ENCODE measurements at regions of chr1 and their contacts with region 1.

Region 1: GRCh38 chr1:84620720-84621313 is 46.6 kb upstream of the CTBS start:
- DNase-seq: peak; percentile 80
- H3K4me3 ChIP-seq: peak overlapping the region; percentile 33 to 66 (median 38)
- H3K27ac ChIP-seq: peak overlapping the region; percentile 69
- H3K4me1 ChIP-seq: peaks cover 15% of the 10 kb centered on the region
- H3K27me3 ChIP-seq: no peaks in the 10 kb centered on the region
- CTCF ChIP-seq: peak; percentile 65 to 84
- POLR2A ChIP-seq: no peak

Region 2: DNA sequence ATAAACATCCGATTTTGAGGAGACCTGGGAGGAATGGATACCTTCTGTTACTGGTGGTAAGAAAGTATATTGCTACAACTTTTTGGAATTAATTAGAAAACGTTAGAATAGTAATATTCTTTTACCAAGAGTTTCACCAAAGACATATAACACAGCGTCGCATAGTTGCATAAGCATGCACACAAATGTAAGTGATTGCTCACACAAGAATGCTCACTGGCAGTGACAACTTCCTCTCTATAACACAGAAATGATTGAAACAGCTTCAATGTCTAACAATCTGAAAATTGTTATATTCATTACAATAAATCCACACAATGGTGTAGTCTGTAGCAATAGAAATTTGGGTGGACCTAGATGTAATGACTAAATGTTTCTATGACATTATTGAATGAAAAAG is 1620.5 kb before region 1 on chr1:
- CTCF ChIA-PET with region 1: no interaction called
- POLR2A ChIA-PET with region 1: no interaction called
- dilution Hi-C with region 1: no loop called
- intact Hi-C with region 1: no loop called
- DNase-seq: no peak
- H3K4me3 ChIP-seq: no peak overlapping the region
- H3K27ac ChIP-seq: no peak overlapping the region
- H3K4me1 ChIP-seq: no peaks in the 10 kb centered on the region
- H3K27me3 ChIP-seq: no peaks in the 10 kb centered on the region
- CTCF ChIP-seq: no peak
- POLR2A ChIP-seq: no peak

Region 3: DNA sequence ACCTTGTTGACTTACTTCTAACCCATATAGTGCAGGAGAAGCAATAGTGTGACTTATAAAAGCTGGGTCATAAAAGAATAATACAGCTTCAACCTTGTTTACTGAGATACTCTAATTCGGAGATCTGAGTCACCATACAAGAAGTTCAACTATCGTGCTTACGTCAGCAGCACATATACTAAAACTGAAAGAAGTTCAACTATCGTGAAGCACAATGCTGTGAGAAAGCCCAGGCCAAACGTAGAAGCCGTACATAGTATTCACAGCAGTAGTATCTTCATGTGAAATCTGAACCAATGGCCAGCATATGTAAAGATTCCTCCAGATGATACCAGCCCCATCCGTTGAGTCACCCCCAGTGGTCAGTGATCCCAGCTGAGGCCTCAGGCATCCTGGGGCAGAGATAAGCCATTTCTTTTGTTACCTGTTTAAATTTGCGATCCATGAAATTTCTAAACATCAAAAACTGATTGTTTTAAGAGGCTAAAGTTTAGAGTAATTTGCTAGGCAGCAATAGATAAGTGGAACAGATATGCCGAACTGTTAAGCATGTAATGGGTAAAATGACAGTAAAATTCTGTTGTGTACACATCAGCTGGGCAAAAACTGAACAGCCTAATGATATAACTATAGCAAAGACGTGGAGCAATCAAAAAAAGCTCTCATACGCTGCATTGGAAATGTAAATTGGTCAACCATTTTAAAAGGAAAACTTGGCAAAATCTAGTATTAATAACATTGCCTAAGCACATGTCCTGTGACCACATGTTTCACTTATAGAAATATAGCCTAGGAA is 373.2 kb before region 1 on chr1:
- CTCF ChIA-PET with region 1: no interaction called
- POLR2A ChIA-PET with region 1: no interaction called
- dilution Hi-C with region 1: no loop called
- intact Hi-C with region 1: loop called (anchors 5 kb)
- DNase-seq: no peak
- H3K4me3 ChIP-seq: peak overlapping the region in 1 of 3 experiments; percentile 18
- H3K27ac ChIP-seq: peak overlapping the region; percentile 90
- H3K4me1 ChIP-seq: peaks cover 35% of the 10 kb centered on the region
- H3K27me3 ChIP-seq: no peaks in the 10 kb centered on the region
- CTCF ChIP-seq: no peak
- POLR2A ChIP-seq: no peak

Region 4: DNA sequence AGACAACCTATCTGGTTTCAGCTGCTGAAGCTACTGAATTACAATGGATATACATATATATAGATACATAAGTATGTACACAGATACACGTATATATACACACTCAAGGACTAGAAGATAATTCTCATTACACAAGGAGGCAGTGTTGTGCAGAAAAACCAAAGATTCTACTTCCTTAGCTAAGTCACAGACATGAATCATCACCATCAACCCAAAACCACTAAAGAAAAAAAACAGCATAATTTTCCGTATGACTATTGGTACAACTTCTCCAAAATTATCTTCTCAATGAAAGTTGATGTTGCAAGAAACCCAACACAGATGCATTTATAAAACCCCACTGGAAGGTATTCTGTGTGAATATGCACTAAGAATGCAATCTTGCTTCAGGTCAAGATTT is 178.6 kb before region 1 on chr1:
- CTCF ChIA-PET with region 1: interaction called, 8 read pairs
- POLR2A ChIA-PET with region 1: no interaction called
- dilution Hi-C with region 1: loop called (anchors 25 kb)
- intact Hi-C with region 1: loop called (anchors 1 kb)
- DNase-seq: peak; percentile 89
- H3K4me3 ChIP-seq: no peak overlapping the region
- H3K27ac ChIP-seq: no peak overlapping the region
- H3K4me1 ChIP-seq: peaks cover 2% of the 10 kb centered on the region
- H3K27me3 ChIP-seq: no peaks in the 10 kb centered on the region
- CTCF ChIP-seq: peak; percentile 18 to 26
- POLR2A ChIP-seq: no peak

Region 5: GRCh38 chr1:84492726-84493125 is 128.1 kb before region 1 on chr1:
- CTCF ChIA-PET with region 1: no interaction called
- POLR2A ChIA-PET with region 1: no interaction called
- dilution Hi-C with region 1: no loop called
- intact Hi-C with region 1: no loop called
- DNase-seq: no peak
- H3K4me3 ChIP-seq: no peak overlapping the region
- H3K27ac ChIP-seq: no peak overlapping the region
- H3K4me1 ChIP-seq: no peaks in the 10 kb centered on the region
- H3K27me3 ChIP-seq: no peaks in the 10 kb centered on the region
- CTCF ChIP-seq: no peak
- POLR2A ChIP-seq: no peak

Region 6: GRCh38 chr1:84603941-84604830 is 16.6 kb before region 1 on chr1:
- CTCF ChIA-PET with region 1: interaction called, 28 read pairs
- POLR2A ChIA-PET with region 1: no interaction called
- dilution Hi-C with region 1: no loop called
- intact Hi-C with region 1: loop called (anchors 1 kb)
- DNase-seq: peak; percentile 91
- H3K4me3 ChIP-seq: peak overlapping the region in 2 of 3 experiments; percentile 11 to 46
- H3K27ac ChIP-seq: peak overlapping the region; percentile 88
- H3K4me1 ChIP-seq: peaks cover 30% of the 10 kb centered on the region
- H3K27me3 ChIP-seq: no peaks in the 10 kb centered on the region
- CTCF ChIP-seq: peak; percentile 66 to 77
- POLR2A ChIP-seq: no peak

Region 7: GRCh38 chr1:84753516-84754385 is 132.9 kb after region 1 on chr1:
- CTCF ChIA-PET with region 1: interaction called, 5 read pairs
- POLR2A ChIA-PET with region 1: no interaction called
- dilution Hi-C with region 1: no loop called
- intact Hi-C with region 1: loop called (anchors 1 kb)
- DNase-seq: peak; percentile 71
- H3K4me3 ChIP-seq: no peak overlapping the region
- H3K27ac ChIP-seq: no peak overlapping the region
- H3K4me1 ChIP-seq: no peaks in the 10 kb centered on the region
- H3K27me3 ChIP-seq: peaks cover 8 to 12% of the 10 kb centered on the region in 2 experiments
- CTCF ChIP-seq: peak; percentile 90 to 93
- POLR2A ChIP-seq: no peak

Region 8: DNA sequence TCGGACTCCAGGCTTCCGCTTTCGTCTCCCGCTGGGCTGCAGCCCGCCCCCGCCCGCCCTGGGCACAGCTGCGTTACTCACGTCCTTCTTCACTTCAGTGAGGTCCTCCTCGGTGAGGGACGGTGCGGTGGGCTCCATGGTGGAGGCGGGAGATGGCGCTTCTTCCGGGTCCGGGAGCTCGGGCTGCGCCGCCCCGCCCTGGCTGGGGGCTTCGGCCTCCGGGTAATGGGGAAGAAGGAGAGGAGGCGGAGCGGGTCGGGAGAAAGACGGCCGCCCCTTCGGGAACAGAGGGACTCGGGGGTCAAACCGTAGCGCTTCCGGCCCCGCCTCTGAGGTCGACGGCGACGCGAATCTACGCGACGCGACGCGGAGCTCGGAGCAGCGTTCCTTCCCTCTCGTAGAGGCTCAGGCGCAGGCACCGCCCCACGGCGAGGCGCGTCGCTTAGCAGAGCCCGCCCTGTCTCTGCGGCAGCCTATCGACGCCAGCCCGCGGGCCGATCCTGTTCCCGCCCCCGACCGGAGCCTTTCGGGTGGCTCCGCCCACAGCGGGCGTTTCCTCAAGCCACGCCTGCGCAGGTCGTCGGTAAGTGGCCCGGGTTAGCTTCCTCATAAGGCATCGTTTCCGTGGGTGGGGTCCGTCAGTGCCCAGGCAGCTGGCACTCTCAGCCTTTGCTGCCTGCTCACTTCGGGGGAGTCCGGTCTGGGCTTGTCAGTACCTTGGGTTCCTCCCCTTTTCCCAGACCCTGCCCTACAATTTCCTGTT is 655.6 kb after region 1 on chr1 and contains the start of gene BCL10:
- CTCF ChIA-PET with region 1: no interaction called
- POLR2A ChIA-PET with region 1: no interaction called
- dilution Hi-C with region 1: no loop called
- intact Hi-C with region 1: loop called (anchors 10 kb)
- DNase-seq: peak; percentile 99
- H3K4me3 ChIP-seq: peak within 1 kb of the TSS; percentile 95 to 99 (median 98)
- H3K27ac ChIP-seq: peak within 1 kb of the TSS; percentile 100
- H3K4me1 ChIP-seq: peaks cover 56% of the 10 kb centered on the region
- H3K27me3 ChIP-seq: no peaks in the 10 kb centered on the region
- CTCF ChIP-seq: no peak
- POLR2A ChIP-seq: peak; percentile 64
- total RNA-seq, gene BCL10: 74.5 and 78.6 TPM in 2 replicates